GM13977 (cell line): ENCODE measurements at regions of chr10 and their contacts with region 1.

Region 1: DNA sequence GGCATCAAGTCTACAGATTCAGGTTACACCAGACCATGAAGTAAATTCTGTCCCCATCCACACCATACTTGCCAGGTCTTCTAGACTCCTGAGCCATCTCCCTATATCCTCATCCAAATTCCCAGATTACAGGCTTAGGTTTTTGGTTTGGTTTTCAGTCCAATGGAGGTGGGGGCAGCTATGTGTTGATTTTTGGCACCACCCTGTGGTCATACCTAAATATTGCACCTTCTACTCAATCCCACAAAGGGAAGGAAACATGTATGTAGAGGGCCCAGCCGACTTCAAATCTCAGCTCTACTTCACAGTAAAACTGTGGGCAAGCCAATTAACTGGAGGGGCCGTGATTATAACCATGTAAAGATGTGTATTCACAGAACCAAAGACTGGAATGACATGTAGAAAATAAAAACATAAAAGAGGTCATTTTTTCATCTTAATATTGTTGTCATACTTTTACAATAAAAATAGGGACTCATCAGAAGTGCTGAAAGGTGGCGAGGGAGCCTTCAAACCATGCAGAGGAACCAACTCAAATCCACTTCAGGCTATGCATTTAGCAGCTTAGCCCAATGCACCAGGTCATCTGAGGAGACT is 19.8 kb downstream of the ERCC6 start:
- DNase-seq: peak; percentile 38
- CTCF ChIP-seq: peak; percentile 71

Region 2: GRCh38 chr10:48981310-48981907 is 537.7 kb before region 1 on chr10:
- in situ Hi-C with region 1: loop called (anchors 25 kb)
- DNase-seq: peak; percentile 68
- CTCF ChIP-seq: peak; percentile 75

Region 3: GRCh38 chr10:49053053-49053997 is 465.8 kb before region 1 on chr10:
- in situ Hi-C with region 1: no loop called
- DNase-seq: peak; percentile 42
- CTCF ChIP-seq: no peak

Region 4: DNA sequence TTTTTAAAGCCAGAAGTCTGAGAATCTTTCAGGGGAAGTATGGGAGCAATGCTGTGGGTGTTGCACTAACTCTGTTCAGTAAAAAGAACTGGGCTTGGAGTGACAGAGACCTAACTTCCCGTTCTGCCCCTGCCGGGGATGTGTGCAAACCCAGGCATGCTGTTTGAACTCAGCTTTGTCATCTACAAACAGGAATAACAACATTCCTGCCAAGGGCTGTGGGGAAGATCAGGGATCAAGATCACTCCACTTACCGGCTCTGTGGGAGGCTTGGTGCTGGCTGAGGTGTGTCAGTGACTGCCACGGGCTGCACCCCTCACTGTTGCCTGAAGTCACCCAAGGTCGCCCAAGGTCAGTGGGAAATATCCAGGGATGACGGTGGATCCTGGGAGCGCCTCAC is 100.1 kb before region 1 on chr10:
- in situ Hi-C with region 1: no loop called
- DNase-seq: no peak
- CTCF ChIP-seq: no peak

Region 5: GRCh38 chr10:49579621-49580020 is 60.5 kb after region 1 on chr10:
- in situ Hi-C with region 1: no loop called
- DNase-seq: no peak
- CTCF ChIP-seq: no peak